ENCODE measurements at regions of chr5 and their contacts with region 1.

Region 1: DNA sequence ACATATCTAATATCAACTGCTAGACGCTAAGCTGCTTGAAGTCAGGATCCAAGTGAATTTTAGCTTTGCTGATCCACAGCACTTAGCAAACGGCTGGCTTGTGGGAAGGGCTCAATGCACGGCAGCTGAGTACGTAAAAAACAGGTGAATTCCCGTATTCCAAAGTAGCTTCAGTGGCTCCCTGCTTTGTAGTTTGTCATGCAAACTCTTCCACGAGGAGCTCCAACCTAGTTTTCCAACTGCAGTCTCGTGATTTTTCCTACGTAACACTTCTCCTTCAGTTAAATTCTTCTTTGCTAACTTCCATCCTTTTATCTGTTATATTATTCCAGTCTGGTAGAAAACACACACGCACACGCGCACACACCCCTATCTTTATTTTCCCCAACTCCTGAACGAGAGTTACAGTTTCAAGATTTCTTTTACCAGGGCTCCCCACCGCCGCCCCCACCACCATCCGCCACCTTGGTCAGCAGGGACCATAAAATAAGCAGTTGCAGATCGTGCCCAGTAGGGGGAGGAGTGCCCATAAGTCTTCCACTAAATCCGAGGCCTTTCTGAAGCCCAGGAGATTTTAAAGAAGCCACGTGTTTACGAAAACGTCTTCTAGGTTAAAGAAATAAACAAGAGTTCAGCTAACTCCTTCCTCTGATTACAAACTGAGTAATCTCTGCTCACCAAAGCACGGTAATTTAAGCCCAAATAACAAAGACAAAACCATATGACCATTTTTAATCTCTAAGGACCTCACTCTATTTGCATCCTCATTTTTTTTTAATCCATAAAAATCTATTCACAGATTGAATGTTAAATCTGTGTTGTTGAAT is 34.8 kb upstream of the TRIO start:
- DNase-seq: peak; percentile 51 to 77
- H3K4me3 ChIP-seq: peak overlapping the region; percentile 30
- H3K27ac ChIP-seq: no peak overlapping the region
- H3K4me1 ChIP-seq: peaks cover 0 to 9% (median 1%) of the 10 kb centered on the region in 4 donors
- H3K27me3 ChIP-seq: no peaks in the 10 kb centered on the region
- CTCF ChIP-seq: peak; percentile 59 to 74

Region 2: GRCh38 chr5:13994621-13995253 is 113.6 kb before region 1 on chr5:
- intact Hi-C with region 1: loop called (anchors 10 kb)
- DNase-seq: no peak
- H3K4me3 ChIP-seq: no peak overlapping the region
- H3K27ac ChIP-seq: no peak overlapping the region
- H3K4me1 ChIP-seq: no peaks in the 10 kb centered on the region
- H3K27me3 ChIP-seq: no peaks in the 10 kb centered on the region
- CTCF ChIP-seq: no peak

Region 3: GRCh38 chr5:14270209-14270702 is 161.9 kb after region 1 on chr5:
- intact Hi-C with region 1: loop called (anchors 1 kb)
- DNase-seq: peak; percentile 49 to 85
- H3K4me3 ChIP-seq: no peak overlapping the region
- H3K27ac ChIP-seq: peak overlapping the region; percentile 25 to 29
- H3K4me1 ChIP-seq: peaks cover 0 to 80% (median 46%) of the 10 kb centered on the region in 4 donors
- H3K27me3 ChIP-seq: no peaks in the 10 kb centered on the region
- CTCF ChIP-seq: peak; percentile 80 to 82

Measured in tibial artery (tissue), 4 donors.